ENCODE measurements at regions of chr3 and their contacts with region 1.

Region 1: GRCh38 chr3:188339410-188340295 is 185.7 kb downstream of the LPP start:
- DNase-seq: peak; percentile 19
- H3K4me3 Mint-ChIP-seq: peak overlapping the region; percentile 66
- H3K27ac Mint-ChIP-seq: peak overlapping the region; percentile 89
- H3K4me1 Mint-ChIP-seq: peaks cover 29% of the 10 kb centered on the region
- H3K27me3 Mint-ChIP-seq: no peaks in the 10 kb centered on the region

Region 2: GRCh38 chr3:188294823-188295487 is 44.7 kb before region 1 on chr3:
- intact Hi-C with region 1: loop called (anchors 1 kb)
- DNase-seq: no peak
- H3K4me3 Mint-ChIP-seq: no peak overlapping the region
- H3K27ac Mint-ChIP-seq: no peak overlapping the region
- H3K4me1 Mint-ChIP-seq: peaks cover 66% of the 10 kb centered on the region
- H3K27me3 Mint-ChIP-seq: no peaks in the 10 kb centered on the region

Region 3: GRCh38 chr3:188320757-188321156 is 18.9 kb before region 1 on chr3:
- intact Hi-C with region 1: loop called (anchors 1 kb)
- DNase-seq: no peak
- H3K4me3 Mint-ChIP-seq: no peak overlapping the region
- H3K27ac Mint-ChIP-seq: no peak overlapping the region
- H3K4me1 Mint-ChIP-seq: peaks cover 50% of the 10 kb centered on the region
- H3K27me3 Mint-ChIP-seq: peaks cover 7% of the 10 kb centered on the region

Region 4: DNA sequence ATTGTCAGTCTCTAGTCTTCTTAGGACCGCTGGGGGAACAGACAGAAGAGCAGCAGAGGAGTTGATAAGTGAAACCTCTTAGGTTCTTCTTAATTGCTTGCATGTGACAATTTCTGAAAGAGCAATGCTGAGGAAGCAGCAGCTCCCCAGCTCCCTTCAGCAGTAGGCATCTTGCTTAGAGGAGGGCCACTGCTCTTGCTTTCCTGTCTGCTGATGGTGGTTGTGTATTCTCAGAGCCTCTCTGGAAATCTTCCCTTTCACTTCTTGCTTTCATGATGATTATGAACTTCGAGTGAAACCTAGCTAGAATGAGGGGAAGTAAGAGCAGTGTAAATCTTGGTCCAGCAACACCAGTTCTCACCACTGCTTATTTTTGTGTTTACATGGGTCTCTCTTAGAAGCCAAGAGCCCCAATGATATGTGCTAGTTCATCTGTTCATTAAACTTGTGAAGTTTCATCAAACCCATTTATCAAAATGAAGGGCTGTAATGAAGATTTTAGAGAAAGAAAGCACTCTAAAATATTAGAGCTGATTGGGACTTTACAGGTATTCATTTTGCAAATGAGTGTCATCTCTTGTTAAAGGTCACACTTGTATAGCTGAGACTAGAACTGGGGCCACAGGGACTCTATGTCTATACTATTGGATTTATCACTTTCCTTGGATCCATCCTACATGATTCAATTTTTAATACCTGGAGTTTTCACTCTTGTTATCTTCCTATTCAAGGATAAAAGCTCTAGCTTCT is 61.0 kb after region 1 on chr3:
- intact Hi-C with region 1: loop called (anchors 1 kb)
- DNase-seq: peak; percentile 22
- H3K4me3 Mint-ChIP-seq: no peak overlapping the region
- H3K27ac Mint-ChIP-seq: peak overlapping the region; percentile 38
- H3K4me1 Mint-ChIP-seq: peaks cover 70% of the 10 kb centered on the region
- H3K27me3 Mint-ChIP-seq: no peaks in the 10 kb centered on the region

Region 5: DNA sequence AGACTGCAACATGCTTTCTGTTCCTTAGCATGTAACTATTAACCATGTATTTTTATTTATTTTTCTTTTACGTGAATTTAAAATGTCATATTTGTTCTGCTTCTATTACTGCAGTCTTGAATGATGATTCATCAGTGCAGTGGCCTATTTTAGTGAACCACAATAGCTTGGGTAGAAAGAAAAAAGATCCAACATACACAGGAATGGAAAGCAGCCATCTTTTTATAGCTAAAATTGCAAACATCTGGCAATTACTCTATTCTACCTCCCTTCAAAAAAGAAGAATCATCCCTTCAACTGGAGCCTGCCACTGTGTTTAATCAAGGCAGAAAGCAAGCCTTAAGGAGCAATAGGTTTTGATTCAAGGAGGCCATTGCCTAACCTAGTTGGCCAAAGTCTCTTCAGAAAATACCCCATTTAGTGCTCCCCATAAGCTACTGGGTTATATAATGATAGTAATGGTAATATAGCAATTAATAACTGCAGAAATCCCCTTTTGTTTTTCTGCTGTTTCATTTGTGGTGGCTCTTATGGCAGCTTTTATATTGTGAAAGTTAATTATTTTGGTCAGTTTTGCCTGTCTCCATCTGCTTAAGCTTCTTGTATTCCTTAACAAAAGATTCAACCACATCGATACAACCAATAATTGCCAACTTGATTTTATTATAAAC is 81.6 kb after region 1 on chr3:
- intact Hi-C with region 1: no loop called
- DNase-seq: no peak
- H3K4me3 Mint-ChIP-seq: no peak overlapping the region
- H3K27ac Mint-ChIP-seq: no peak overlapping the region
- H3K4me1 Mint-ChIP-seq: peaks cover 17% of the 10 kb centered on the region
- H3K27me3 Mint-ChIP-seq: no peaks in the 10 kb centered on the region

Region 6: DNA sequence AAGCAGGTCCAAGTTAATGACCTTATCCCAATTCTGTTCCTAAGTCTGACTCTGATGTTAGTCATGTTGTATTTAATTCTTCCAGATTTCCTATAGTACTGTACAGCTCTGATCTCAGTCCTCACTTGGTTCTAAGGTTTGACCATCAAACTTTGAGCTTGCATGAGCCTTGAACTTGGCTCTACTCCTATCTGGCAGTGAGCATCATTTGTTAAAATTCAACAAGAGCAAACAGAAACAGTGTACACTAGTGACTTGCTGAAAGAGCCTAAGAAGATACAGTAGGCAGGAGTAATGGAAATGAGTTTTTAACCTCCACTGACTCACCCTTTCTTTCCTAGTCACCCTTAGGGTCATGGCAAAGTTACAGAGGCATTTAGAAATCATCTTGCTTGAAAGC is 381.0 kb after region 1 on chr3:
- intact Hi-C with region 1: loop called (anchors 10 kb)
- DNase-seq: no peak
- H3K4me3 Mint-ChIP-seq: no peak overlapping the region
- H3K27ac Mint-ChIP-seq: no peak overlapping the region
- H3K4me1 Mint-ChIP-seq: peaks cover 27% of the 10 kb centered on the region
- H3K27me3 Mint-ChIP-seq: no peaks in the 10 kb centered on the region

Measured in activated T-helper 2 cell treated with anti-CD3 and anti-CD28 coated beads, Interferon-gamma antibody, Interleukin-2, Interleukin-4, amounts not matched to agents 10 μg/mL and 5 μg/mL and 100 μg/mL, durations not matched to agents 14 hours and 24 hours and 36 hours (primary cell).